Activated B cell treated with CpG ODN at 0.5 μM for 24 hours (primary cell): ENCODE measurements at regions of chr11 and their contacts with region 1.

Region 1: DNA sequence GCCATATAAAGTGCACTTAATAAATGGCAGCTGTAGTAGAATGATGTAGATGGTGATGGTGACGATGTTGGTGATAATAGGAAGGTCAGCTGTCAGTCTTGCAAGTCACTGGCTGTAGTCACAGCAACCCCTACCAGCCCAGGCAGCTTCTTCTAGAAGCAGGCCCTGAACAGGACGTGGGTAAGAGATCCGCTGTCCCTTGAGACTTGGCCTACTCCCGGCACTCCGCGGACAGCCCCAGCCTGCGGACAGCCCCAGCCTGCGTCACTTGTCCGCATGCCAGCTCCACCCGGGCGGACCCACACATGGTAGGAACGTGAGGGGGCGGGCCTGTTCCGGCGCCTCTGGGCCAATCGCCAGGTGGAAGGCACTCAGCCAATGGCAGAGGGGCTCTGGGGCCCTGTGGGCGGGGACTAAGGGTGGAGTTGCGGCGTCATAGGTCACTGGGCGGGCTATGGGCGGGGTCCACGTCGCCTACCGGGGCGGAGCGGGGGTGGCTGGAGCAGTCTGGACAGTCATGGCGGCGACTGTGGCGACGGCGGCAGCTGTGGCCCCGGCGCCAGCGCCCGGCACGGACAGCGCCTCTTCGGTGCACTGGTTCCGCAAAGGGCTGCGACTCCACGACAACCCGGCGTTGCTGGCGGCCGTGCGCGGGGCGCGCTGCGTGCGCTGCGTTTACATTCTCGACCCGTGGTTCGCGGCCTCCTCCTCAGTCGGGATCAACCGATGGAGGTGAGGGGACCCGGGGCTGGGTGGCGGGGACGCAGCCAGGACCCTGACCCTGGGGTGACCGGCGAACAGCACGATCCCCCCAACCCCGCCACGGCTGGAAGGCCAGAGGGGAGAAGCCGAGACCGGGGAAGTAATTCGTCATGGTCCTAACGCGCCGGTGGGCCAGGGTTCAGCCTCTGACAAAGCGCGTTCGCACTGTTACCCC is at the start of gene CRY2:
- DNase-seq: peak; percentile 97
- ATAC-seq: peak; percentile 89
- H3K4me3 Mint-ChIP-seq: peak within 1 kb of the TSS; percentile 85
- H3K27ac Mint-ChIP-seq: peak within 1 kb of the TSS; percentile 94
- H3K4me1 Mint-ChIP-seq: peaks cover 68% of the 10 kb centered on the region
- H3K27me3 Mint-ChIP-seq: no peaks in the 10 kb centered on the region
- CTCF ChIP-seq: no peak
- total RNA-seq, gene CRY2: 47.5 and 56.8 TPM in 2 replicates

Region 2: GRCh38 chr11:45804761-45805304 is 42.4 kb before region 1 on chr11 and contains the start of gene SLC35C1:
- CTCF ChIA-PET with region 1: interaction called, 5 read pairs
- POLR2A ChIA-PET with region 1: interaction called, 22 read pairs
- intact Hi-C with region 1: loop called (anchors 1 kb)
- DNase-seq: peak; percentile 95
- ATAC-seq: peak; percentile 96
- H3K4me3 Mint-ChIP-seq: peak within 1 kb of the TSS; percentile 92
- H3K27ac Mint-ChIP-seq: peak within 1 kb of the TSS; percentile 78
- H3K4me1 Mint-ChIP-seq: peaks cover 41% of the 10 kb centered on the region
- H3K27me3 Mint-ChIP-seq: no peaks in the 10 kb centered on the region
- CTCF ChIP-seq: no peak
- total RNA-seq, gene SLC35C1: 8.6 and 8.8 TPM in 2 replicates

Region 3: DNA sequence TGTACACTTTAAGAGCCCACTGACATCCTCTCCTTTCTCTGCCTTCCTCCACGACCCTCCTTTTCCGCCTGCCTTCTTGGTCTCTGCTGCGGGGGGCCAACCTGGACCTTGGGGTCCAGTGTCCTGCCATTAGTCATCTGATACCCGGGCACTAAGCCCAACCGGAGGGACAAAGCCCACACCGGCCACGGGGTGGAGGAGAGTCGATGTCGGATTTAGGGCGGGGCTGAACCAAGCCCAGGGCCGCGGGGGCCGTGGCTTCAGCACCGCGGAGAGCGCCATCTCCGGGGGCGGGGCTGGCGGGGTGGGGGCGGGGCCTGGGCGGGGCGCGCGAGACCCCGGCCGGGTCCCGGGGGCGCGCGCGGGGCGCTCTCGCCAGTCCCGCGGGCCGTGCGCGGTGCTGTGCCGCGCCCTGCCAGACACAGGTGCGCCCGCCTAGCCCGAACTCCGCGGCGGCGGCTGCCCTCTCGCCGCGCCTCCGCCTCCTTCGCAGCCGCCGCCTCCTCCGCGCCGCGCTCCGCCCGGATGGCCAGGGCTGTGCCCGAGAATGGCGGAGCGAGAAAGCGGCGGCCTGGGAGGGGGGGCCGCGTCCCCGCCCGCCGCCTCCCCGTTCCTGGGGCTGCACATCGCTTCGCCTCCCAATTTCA is 38.2 kb after region 1 on chr11 and contains the start of gene MAPK8IP1:
- CTCF ChIA-PET with region 1: no interaction called
- POLR2A ChIA-PET with region 1: no interaction called
- intact Hi-C with region 1: loop called (anchors 2 kb)
- DNase-seq: peak; percentile 61
- ATAC-seq: peak; percentile 88
- H3K4me3 Mint-ChIP-seq: peak within 1 kb of the TSS; percentile 80
- H3K27ac Mint-ChIP-seq: no peak within 1 kb of the TSS
- H3K4me1 Mint-ChIP-seq: peaks cover 10% of the 10 kb centered on the region
- H3K27me3 Mint-ChIP-seq: no peaks in the 10 kb centered on the region
- CTCF ChIP-seq: no peak
- total RNA-seq, gene MAPK8IP1: 1.9 and 3.4 TPM in 2 replicates

Region 4: DNA sequence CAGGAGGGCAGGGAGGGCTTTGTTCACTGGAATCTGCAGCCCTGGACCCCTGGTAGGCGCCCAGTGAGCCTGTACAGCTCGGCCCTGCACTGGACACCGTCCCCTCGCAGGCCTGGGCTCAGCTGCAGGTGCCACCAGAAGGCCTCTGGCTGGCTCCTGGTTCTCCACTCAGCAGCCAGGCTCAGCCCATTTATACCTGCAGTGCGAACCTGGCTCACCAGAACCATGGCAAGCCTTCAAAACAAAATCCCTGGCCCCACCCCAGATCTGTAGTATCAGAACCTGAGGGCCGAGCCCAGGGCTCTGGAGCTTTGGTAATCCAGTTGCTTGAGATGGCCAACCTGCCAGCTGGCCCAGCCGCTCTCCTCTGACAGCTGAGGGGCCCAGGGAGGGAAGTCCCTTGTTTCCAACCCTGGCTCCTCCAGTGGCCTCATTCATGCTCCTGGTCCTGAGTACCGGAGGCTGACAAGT is 60.7 kb after region 1 on chr11:
- CTCF ChIA-PET with region 1: no interaction called
- POLR2A ChIA-PET with region 1: interaction called, 14 read pairs
- intact Hi-C with region 1: no loop called
- DNase-seq: no peak
- ATAC-seq: no peak
- H3K4me3 Mint-ChIP-seq: no peak overlapping the region
- H3K27ac Mint-ChIP-seq: no peak overlapping the region
- H3K4me1 Mint-ChIP-seq: peaks cover 14% of the 10 kb centered on the region
- H3K27me3 Mint-ChIP-seq: no peaks in the 10 kb centered on the region
- CTCF ChIP-seq: no peak

Region 5: GRCh38 chr11:45939836-45940235 is 92.6 kb after region 1 on chr11:
- CTCF ChIA-PET with region 1: no interaction called
- POLR2A ChIA-PET with region 1: interaction called, 22 read pairs
- intact Hi-C with region 1: loop called (anchors 1 kb)
- DNase-seq: no peak
- ATAC-seq: no peak
- H3K4me3 Mint-ChIP-seq: no peak overlapping the region
- H3K27ac Mint-ChIP-seq: peak overlapping the region; percentile 88
- H3K4me1 Mint-ChIP-seq: peaks cover 60% of the 10 kb centered on the region
- H3K27me3 Mint-ChIP-seq: no peaks in the 10 kb centered on the region
- CTCF ChIP-seq: no peak

Region 6: DNA sequence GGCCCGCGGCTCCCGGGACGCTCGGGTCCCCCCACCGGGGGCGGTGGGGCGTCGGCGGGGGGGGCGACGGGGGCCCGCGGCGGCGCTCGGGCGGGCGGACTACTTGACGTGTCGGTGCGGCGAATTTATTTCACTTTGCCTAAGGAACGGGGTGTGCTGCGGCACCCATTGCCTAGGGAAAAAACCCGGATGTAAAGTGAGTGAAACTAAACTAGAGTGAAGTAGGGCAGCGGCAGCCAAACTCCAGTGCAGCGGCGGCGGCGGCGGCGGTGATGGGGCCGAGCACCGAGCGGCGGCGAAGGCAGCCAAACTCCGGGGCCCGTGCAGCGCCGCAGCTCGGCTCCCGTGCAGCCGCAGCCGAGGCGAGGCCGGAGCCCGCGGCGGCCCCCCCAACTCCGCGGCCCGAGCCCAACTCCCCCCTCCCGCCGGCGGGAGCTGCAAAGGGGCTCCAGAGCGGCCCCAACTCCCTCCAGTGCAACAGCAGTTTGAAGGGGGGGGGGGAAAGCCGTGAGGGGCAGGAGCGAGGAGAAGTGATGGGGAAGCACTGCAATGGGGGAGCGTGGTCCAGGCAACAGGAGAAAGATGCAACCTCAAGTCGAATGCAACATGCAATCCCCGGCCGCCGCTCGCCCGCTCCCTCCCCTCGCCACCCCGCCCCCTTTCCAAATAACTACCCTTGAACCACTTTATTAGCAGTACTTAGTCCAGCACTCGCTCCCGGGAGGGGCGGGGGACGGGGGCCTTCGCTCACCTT is 274.7 kb after region 1 on chr11:
- CTCF ChIA-PET with region 1: no interaction called
- POLR2A ChIA-PET with region 1: interaction called, 9 read pairs
- intact Hi-C with region 1: loop called (anchors 1 kb)
- DNase-seq: no peak
- ATAC-seq: peak; percentile 47
- H3K4me3 Mint-ChIP-seq: peak overlapping the region; percentile 87
- H3K27ac Mint-ChIP-seq: peak overlapping the region; percentile 91
- H3K4me1 Mint-ChIP-seq: peaks cover 30% of the 10 kb centered on the region
- H3K27me3 Mint-ChIP-seq: no peaks in the 10 kb centered on the region
- CTCF ChIP-seq: no peak

Region 7: DNA sequence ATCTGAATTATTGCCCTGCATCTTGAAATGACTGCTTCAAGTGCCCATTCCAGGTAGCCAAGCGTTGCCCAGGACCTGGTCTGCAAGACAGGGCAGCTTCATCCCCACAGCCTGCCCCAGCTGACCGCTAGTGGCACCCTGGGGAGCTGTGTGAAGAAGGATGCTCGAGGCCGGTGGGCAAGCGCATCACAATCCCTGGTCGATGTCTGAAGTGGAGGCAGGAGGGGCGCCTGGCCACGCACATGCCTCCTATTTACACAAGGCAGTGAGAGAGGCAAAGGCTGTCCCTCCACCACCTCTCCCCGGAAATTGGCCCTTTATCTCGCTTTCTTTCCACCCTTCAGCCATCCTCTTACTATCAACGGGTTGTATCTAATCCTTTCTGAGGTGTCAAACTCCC is 302.1 kb after region 1 on chr11:
- CTCF ChIA-PET with region 1: no interaction called
- POLR2A ChIA-PET with region 1: no interaction called
- intact Hi-C with region 1: no loop called
- DNase-seq: no peak
- ATAC-seq: no peak
- H3K4me3 Mint-ChIP-seq: no peak overlapping the region
- H3K27ac Mint-ChIP-seq: no peak overlapping the region
- H3K4me1 Mint-ChIP-seq: no peaks in the 10 kb centered on the region
- H3K27me3 Mint-ChIP-seq: peaks cover 17% of the 10 kb centered on the region
- CTCF ChIP-seq: no peak

Region 8: DNA sequence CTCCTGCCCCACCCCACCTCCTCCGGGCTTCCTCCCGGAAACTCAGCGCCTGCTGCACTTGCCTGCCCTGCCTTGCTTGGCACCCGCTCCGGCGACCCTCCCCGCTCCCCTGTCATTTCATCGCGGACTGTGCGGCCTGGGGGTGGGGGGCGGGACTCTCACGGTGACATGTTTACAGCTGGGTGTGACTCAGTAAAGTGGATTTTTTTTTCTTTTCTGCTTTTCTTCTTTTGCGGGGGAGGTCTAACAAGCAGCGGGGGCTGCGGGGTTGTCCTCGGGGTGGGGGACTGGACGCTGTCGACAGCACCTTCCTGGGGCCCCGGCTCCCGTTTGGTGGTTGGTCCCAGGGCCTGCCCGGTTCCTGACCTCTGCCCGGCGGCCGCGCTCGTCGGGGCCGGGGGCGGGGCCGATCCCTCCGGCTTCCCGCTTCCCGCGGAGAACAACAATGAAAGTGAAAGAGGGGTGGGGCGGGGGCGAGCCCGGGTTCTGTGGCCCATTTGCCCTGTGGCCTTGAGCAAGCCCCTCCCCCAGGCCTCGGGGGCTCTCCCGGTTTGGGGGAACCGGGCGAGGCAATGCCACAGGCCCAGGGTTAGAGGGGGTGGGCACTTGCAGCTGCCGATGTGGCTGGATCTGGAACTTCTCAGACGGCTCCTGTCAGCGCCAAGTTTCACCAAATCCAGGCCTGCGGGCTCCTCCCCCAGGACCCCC is 533.3 kb after region 1 on chr11:
- CTCF ChIA-PET with region 1: no interaction called
- POLR2A ChIA-PET with region 1: no interaction called
- intact Hi-C with region 1: no loop called
- DNase-seq: no peak
- ATAC-seq: peak; percentile 44
- H3K4me3 Mint-ChIP-seq: peak overlapping the region; percentile 80
- H3K27ac Mint-ChIP-seq: no peak overlapping the region
- H3K4me1 Mint-ChIP-seq: peaks cover 8% of the 10 kb centered on the region
- H3K27me3 Mint-ChIP-seq: peaks cover 24% of the 10 kb centered on the region
- CTCF ChIP-seq: no peak